ENCODE measurements at regions of chr16 and their contacts with region 1.

Region 1: DNA sequence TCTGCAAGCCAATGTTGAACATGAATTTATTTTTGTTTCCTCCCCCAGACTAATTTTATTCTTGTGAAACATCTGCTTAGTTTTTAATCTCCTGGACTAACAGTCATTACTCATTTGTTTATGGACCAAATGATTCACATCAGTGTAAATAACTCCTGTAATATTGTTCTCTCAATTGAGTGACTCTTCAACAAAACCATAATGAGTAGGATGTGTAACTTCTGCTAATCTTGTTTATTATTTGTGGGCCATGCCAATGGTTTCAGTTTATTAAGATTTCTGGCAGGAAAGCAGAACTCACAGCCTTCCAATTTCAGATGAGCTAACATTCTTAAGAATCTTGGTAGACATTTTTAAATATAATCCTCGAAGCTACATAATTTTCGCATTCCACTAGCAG is 1216.3 kb upstream of the GOT2 start:
- DNase-seq: no peak
- H3K4me3 ChIP-seq: no peak overlapping the region
- H3K27ac ChIP-seq: no peak overlapping the region
- H3K4me1 ChIP-seq: no peaks in the 10 kb centered on the region
- H3K27me3 ChIP-seq: no peaks in the 10 kb centered on the region
- CTCF ChIP-seq: no peak

Region 2: DNA sequence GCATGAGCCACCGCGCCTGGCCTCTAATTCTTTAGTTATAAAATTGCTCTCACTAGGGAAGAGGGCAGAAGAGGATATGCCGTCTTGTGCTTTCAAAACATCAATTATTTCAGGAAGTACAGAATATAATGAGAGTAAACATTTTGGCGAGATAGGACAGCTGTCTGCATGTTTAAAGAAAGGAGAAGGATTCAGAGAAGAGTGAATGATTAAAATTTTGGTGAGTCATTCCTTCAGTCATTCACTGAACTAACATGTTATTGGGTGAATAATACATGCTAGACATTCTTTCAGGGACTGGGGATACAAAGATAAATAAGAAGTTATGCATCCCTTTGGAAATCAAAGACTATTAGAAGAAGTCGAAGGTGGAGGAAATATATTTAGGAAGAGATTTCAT is 626.0 kb before region 1 on chr16:
- CTCF ChIA-PET with region 1: no interaction called
- POLR2A ChIA-PET with region 1: no interaction called
- intact Hi-C with region 1: no loop called
- DNase-seq: no peak
- H3K4me3 ChIP-seq: no peak overlapping the region
- H3K27ac ChIP-seq: no peak overlapping the region
- H3K4me1 ChIP-seq: no peaks in the 10 kb centered on the region
- H3K27me3 ChIP-seq: no peaks in the 10 kb centered on the region
- CTCF ChIP-seq: no peak

Region 3: DNA sequence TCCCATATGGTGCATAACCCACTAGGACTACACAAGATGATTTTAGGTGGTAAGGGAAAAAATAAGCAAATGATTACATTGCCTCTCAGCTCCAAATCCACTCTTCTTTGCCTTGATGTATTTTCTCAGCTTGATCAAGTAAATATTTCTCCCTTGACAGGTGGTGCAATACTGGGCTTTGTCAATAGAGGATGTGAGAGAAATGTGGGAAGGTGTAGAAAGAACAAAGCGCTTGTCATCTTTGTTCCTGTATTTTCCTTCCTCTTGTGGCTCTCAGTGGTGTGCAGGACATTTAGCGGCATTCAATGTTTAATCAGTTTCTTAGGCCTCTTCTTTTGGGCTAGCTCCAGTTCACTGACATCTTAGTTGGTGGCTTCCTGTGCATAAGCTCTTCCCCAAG is 50.5 kb before region 1 on chr16:
- CTCF ChIA-PET with region 1: no interaction called
- POLR2A ChIA-PET with region 1: no interaction called
- intact Hi-C with region 1: loop called (anchors 10 kb)
- DNase-seq: no peak
- H3K4me3 ChIP-seq: no peak overlapping the region
- H3K27ac ChIP-seq: no peak overlapping the region
- H3K4me1 ChIP-seq: no peaks in the 10 kb centered on the region
- H3K27me3 ChIP-seq: no peaks in the 10 kb centered on the region
- CTCF ChIP-seq: no peak

Region 4: DNA sequence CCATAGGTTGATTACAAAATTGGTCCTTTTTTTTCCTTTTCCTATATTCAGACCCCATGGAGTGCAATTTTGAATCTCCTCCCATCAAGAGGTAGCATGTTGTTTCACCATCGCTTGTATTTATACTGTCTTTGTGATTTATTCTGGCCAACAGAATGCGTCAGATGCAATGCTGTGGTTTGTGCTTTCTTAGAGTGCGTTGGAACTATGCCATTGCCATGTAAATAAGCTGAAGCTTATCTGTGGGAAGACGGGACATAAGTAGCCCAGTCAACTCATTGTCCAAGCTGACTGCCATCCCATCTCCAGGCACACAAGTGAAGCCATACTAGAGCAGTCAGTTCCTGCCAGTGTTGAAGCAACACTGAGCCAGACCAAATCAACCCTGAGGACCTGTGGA is 122.9 kb after region 1 on chr16:
- CTCF ChIA-PET with region 1: no interaction called
- POLR2A ChIA-PET with region 1: no interaction called
- intact Hi-C with region 1: no loop called
- DNase-seq: no peak
- H3K4me3 ChIP-seq: no peak overlapping the region
- H3K27ac ChIP-seq: no peak overlapping the region
- H3K4me1 ChIP-seq: no peaks in the 10 kb centered on the region
- H3K27me3 ChIP-seq: peaks cover 9% of the 10 kb centered on the region
- CTCF ChIP-seq: no peak

Region 5: GRCh38 chr16:61263400-61263799 is 1313.0 kb after region 1 on chr16:
- CTCF ChIA-PET with region 1: no interaction called
- POLR2A ChIA-PET with region 1: no interaction called
- intact Hi-C with region 1: no loop called
- DNase-seq: no peak
- H3K4me3 ChIP-seq: no peak overlapping the region
- H3K27ac ChIP-seq: no peak overlapping the region
- H3K4me1 ChIP-seq: no peaks in the 10 kb centered on the region
- H3K27me3 ChIP-seq: no peaks in the 10 kb centered on the region
- CTCF ChIP-seq: no peak